Activated CD4-positive, alpha-beta memory T cell treated with anti-CD3 and anti-CD28 coated beads, Interleukin-2, amount 10 ng/mL, durations not matched to agents 7 days and 5 days (primary cell): ENCODE measurements at regions of chr3 and their contacts with region 1.

Region 1: GRCh38 chr3:42778644-42779043 is 5.6 kb upstream of the CCDC13 start:
- DNase-seq: no peak
- H3K4me3 Mint-ChIP-seq: no peak overlapping the region
- H3K27ac Mint-ChIP-seq: no peak overlapping the region
- H3K4me1 Mint-ChIP-seq: peaks cover 2% of the 10 kb centered on the region
- H3K27me3 Mint-ChIP-seq: no peaks in the 10 kb centered on the region

Region 2: GRCh38 chr3:42839616-42840015 is 61.0 kb after region 1 on chr3:
- CTCF ChIA-PET with region 1: interaction called, 16 read pairs
- POLR2A ChIA-PET with region 1: no interaction called
- DNase-seq: peak; percentile 32
- H3K4me3 Mint-ChIP-seq: no peak overlapping the region
- H3K27ac Mint-ChIP-seq: no peak overlapping the region
- H3K4me1 Mint-ChIP-seq: no peaks in the 10 kb centered on the region
- H3K27me3 Mint-ChIP-seq: peaks cover 5% of the 10 kb centered on the region

Region 3: DNA sequence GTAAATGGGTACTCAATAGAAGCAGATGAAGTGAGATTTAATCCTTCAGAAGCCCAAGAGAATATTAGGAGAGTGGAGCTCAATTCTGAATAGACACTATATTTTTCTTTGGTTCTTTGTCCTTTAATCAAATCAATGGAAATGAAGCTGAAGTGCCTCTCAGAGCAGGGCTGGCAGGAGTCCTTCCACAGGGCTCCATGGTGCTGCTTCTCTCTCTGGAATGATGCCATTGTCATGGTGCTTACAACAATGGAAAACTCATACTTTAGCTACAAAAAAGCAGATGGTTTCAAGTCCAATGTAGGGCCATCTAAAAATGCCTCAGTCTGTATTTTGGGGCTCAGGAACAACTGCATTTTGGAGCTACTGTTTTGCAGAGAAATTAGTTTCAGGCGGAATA is 632.8 kb after region 1 on chr3:
- CTCF ChIA-PET with region 1: no interaction called
- POLR2A ChIA-PET with region 1: no interaction called
- DNase-seq: no peak
- H3K4me3 Mint-ChIP-seq: no peak overlapping the region
- H3K27ac Mint-ChIP-seq: no peak overlapping the region
- H3K4me1 Mint-ChIP-seq: peaks cover 5% of the 10 kb centered on the region
- H3K27me3 Mint-ChIP-seq: no peaks in the 10 kb centered on the region